ENCODE measurements at regions of chr1 and their contacts with region 1.

Region 1: DNA sequence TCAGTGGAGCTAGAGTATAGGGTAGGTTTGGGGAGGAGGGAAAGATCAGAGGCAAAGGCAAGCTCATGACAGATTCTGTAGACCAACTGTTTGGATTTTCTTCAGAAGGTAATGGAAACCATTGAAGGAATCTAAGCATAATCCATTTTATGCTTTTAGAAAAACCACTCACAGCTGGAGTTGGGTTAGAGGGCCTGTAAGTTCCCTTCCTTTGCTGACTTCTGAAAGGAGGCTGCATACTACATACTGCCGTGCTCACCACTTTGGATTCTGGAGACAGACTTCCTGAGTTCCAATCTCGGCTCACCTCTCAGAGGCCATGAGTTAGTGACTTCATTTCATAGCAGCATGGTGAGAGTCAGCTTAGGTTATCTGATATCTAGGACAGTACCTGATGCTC is 6.4 kb upstream of the SYT2 start:
- DNase-seq: no peak
- ATAC-seq: no peak
- H3K4me3 Mint-ChIP-seq: no peak overlapping the region
- H3K27ac Mint-ChIP-seq: no peak overlapping the region
- H3K4me1 Mint-ChIP-seq: peaks cover 2% of the 10 kb centered on the region
- H3K27me3 Mint-ChIP-seq: peaks cover 18% of the 10 kb centered on the region
- CTCF ChIP-seq: no peak

Region 2: DNA sequence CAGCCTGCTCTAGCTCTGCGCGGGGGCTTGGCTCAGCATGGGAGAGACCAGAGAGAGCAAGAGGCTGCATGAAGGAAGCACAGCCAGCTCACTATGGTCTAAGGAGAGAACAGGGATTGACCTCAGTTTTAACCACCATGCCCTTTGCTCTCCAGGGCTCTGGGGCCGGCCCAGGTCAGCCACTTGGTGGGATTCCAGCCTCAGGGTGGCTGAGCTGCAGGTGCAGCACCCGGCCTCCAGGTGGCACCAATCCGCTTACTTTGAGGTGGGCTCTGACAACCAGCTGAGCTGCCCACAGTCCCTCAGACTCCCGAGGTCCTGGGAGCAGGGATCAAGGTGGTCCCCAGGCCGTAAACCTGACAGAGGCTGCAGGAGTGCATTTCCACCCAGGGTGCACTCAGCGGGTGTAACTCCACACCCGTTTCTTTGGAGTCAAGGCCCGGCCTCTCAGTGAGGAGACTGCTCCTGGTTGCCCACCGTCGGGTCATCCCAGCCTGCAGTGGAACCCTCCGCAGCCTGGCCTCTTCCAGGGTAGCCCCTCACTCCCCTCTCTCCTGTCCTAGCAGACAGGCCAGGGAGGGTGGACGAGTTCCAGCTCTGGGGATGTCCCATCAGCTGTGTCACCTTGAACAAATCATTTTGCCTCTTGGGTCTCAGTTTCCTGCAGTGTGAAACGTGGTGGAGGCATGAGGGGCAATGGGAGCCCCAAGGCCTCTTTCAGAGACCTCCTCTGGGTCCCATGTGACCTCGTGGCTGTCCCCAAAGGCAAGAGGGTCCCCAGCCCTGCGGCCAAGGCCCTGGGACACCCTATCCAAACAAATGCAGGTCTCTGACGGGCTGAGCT is 523.7 kb before region 1 on chr1:
- CTCF ChIA-PET with region 1: interaction called, 36 read pairs
- POLR2A ChIA-PET with region 1: no interaction called
- intact Hi-C with region 1: loop called (anchors 1 kb)
- DNase-seq: peak; percentile 57
- ATAC-seq: peak; percentile 70
- H3K4me3 Mint-ChIP-seq: peak overlapping the region; percentile 64
- H3K27ac Mint-ChIP-seq: no peak overlapping the region
- H3K4me1 Mint-ChIP-seq: peaks cover 18% of the 10 kb centered on the region
- H3K27me3 Mint-ChIP-seq: peaks cover 30% of the 10 kb centered on the region
- CTCF ChIP-seq: no peak

Region 3: GRCh38 chr1:202274611-202275010 is 442.0 kb before region 1 on chr1:
- CTCF ChIA-PET with region 1: interaction called, 12 read pairs
- POLR2A ChIA-PET with region 1: no interaction called
- intact Hi-C with region 1: loop called (anchors 1 kb)
- DNase-seq: no peak
- ATAC-seq: no peak
- H3K4me3 Mint-ChIP-seq: no peak overlapping the region
- H3K27ac Mint-ChIP-seq: no peak overlapping the region
- H3K4me1 Mint-ChIP-seq: no peaks in the 10 kb centered on the region
- H3K27me3 Mint-ChIP-seq: peaks cover 15% of the 10 kb centered on the region
- CTCF ChIP-seq: no peak

Region 4: DNA sequence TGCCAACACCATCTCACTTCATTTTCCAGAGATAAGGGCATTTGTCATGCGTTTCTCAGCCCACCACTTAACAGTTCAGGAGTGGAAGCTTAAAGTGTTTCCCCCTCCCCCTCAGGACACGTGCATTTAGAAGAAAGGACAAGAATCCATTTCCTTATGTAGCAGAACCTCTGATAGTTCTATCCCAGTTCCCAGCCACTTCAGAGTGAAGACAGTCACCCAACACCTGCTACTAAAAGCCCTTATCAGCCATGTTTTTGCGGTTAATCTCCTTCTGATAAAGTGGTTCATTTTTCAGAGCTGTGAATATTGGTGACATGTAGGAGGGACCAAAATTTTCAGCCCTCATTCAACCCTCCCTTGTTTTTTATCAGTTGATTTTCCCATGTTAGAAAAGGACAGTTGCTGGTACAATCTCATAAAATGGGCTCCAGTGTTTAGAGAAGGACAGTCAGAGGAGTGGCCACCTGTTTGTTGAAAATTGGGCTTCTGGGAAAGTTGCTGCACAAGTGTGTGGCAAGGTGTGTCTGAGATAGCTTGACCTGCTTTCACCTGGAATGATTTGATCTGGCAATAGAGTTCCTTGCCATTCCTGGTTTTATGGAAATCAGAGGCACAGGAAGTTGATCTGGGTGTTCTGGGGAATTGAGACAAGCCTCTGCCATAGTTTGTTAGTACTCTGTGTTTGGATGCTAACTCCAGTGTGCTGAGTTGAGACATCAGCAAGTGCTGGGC is 254.1 kb before region 1 on chr1:
- CTCF ChIA-PET with region 1: interaction called, 39 read pairs
- POLR2A ChIA-PET with region 1: no interaction called
- intact Hi-C with region 1: loop called (anchors 1 kb)
- DNase-seq: no peak
- ATAC-seq: no peak
- H3K4me3 Mint-ChIP-seq: no peak overlapping the region
- H3K27ac Mint-ChIP-seq: no peak overlapping the region
- H3K4me1 Mint-ChIP-seq: no peaks in the 10 kb centered on the region
- H3K27me3 Mint-ChIP-seq: no peaks in the 10 kb centered on the region
- CTCF ChIP-seq: no peak

Region 5: GRCh38 chr1:202571347-202572339 is 145.0 kb before region 1 on chr1:
- CTCF ChIA-PET with region 1: interaction called, 11 read pairs
- POLR2A ChIA-PET with region 1: no interaction called
- intact Hi-C with region 1: loop called (anchors 5 kb)
- DNase-seq: no peak
- ATAC-seq: peak; percentile 52
- H3K4me3 Mint-ChIP-seq: no peak overlapping the region
- H3K27ac Mint-ChIP-seq: no peak overlapping the region
- H3K4me1 Mint-ChIP-seq: peaks cover 8% of the 10 kb centered on the region
- H3K27me3 Mint-ChIP-seq: no peaks in the 10 kb centered on the region
- CTCF ChIP-seq: peak; percentile 18

Region 6: GRCh38 chr1:203202431-203203245 is 486.0 kb after region 1 on chr1:
- CTCF ChIA-PET with region 1: no interaction called
- POLR2A ChIA-PET with region 1: no interaction called
- intact Hi-C with region 1: no loop called
- DNase-seq: no peak
- ATAC-seq: no peak
- H3K4me3 Mint-ChIP-seq: no peak overlapping the region
- H3K27ac Mint-ChIP-seq: no peak overlapping the region
- H3K4me1 Mint-ChIP-seq: no peaks in the 10 kb centered on the region
- H3K27me3 Mint-ChIP-seq: peaks cover 32% of the 10 kb centered on the region
- CTCF ChIP-seq: no peak